AG04450 (cell line): ENCODE measurements at regions of chr10 and their contacts with region 1.

Region 1: GRCh38 chr10:77756319-77757232 is 119.0 kb upstream of the KCNMA1 start:
- DNase-seq: peak; percentile 43
- H3K4me3 ChIP-seq: no peak overlapping the region
- H3K27ac ChIP-seq: no peak overlapping the region
- H3K27me3 ChIP-seq: no peaks in the 10 kb centered on the region
- CTCF ChIP-seq: peak; percentile 89

Region 2: DNA sequence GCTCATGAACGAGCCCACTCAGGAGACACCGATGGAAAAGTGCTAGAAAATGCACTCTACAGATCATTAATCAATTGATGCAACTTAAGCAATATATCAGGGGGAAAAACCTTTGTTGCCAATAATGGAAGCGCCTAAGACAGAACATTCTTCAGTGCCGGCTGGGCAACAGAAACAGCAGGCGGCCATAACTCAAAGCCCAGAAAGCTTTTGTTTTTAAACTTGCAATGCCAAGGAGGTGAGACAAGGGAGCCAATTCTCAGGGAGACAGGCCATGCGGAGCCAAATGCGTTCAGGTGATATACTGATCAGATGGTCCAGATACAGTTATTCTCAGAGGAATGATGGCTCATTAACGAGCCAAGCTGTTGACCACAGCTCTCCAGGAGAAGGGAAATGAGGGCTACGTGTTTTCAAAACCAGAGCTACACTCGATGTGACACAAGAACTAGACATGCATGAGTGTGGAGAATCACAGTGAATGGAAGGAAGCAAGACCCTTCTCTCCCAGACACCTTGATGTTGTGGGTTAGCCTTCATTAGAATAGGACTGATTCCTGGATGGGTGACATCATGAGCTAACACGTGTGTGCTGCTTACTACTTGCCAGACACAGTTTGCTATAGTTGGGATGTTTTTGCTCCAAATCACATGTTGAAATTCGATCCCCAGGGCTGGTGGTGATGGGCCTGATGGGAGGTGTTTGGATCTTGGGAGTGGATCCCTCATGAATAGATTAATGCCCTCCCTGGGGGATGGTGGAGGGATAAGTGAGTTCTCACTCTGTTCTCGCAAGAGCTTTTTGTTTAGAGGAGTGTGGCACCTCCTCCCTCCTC is 39.9 kb before region 1 on chr10:
- CTCF ChIA-PET with region 1: interaction called, 26 read pairs
- POLR2A ChIA-PET with region 1: no interaction called
- DNase-seq: no peak
- H3K4me3 ChIP-seq: no peak overlapping the region
- H3K27ac ChIP-seq: no peak overlapping the region
- H3K27me3 ChIP-seq: peaks cover 5% of the 10 kb centered on the region
- CTCF ChIP-seq: no peak

Region 3: GRCh38 chr10:77737608-77738007 is 19.0 kb before region 1 on chr10:
- CTCF ChIA-PET with region 1: interaction called, 10 read pairs
- POLR2A ChIA-PET with region 1: interaction called, 3 read pairs
- DNase-seq: peak; percentile 62
- H3K4me3 ChIP-seq: no peak overlapping the region
- H3K27ac ChIP-seq: no peak overlapping the region
- H3K27me3 ChIP-seq: no peaks in the 10 kb centered on the region
- CTCF ChIP-seq: no peak

Region 4: GRCh38 chr10:77770081-77770867 is 13.7 kb after region 1 on chr10:
- CTCF ChIA-PET with region 1: interaction called, 11 read pairs
- POLR2A ChIA-PET with region 1: no interaction called
- DNase-seq: no peak
- H3K4me3 ChIP-seq: no peak overlapping the region
- H3K27ac ChIP-seq: no peak overlapping the region
- H3K27me3 ChIP-seq: no peaks in the 10 kb centered on the region
- CTCF ChIP-seq: no peak

Region 5: GRCh38 chr10:77907900-77908717 is 151.5 kb after region 1 on chr10:
- CTCF ChIA-PET with region 1: no interaction called
- POLR2A ChIA-PET with region 1: no interaction called
- DNase-seq: no peak
- H3K4me3 ChIP-seq: no peak overlapping the region
- H3K27ac ChIP-seq: no peak overlapping the region
- H3K27me3 ChIP-seq: no peaks in the 10 kb centered on the region
- CTCF ChIP-seq: no peak

Region 6: GRCh38 chr10:77926566-77927401 is 170.2 kb after region 1 on chr10 and contains the start of gene DLG5:
- CTCF ChIA-PET with region 1: no interaction called
- POLR2A ChIA-PET with region 1: no interaction called
- DNase-seq: no peak
- H3K4me3 ChIP-seq: peak within 1 kb of the TSS; percentile 83
- H3K27ac ChIP-seq: peak within 1 kb of the TSS; percentile 34
- H3K27me3 ChIP-seq: no peaks in the 10 kb centered on the region
- CTCF ChIP-seq: no peak
- polyA plus RNA-seq, gene DLG5: 16.3 and 21.9 TPM in 2 replicates